Common myeloid progenitor, CD34-positive (primary cell): ENCODE measurements at regions of chr7 and their contacts with region 1.

Region 1: GRCh38 chr7:38107486-38107893 is 70.6 kb upstream of the STARD3NL start:
- DNase-seq: peak; percentile 51 to 71 (median 65)
- H3K4me3 ChIP-seq: no peak overlapping the region
- H3K27ac ChIP-seq: no peak overlapping the region
- H3K4me1 ChIP-seq: peaks cover 0 to 8% (median 7%) of the 10 kb centered on the region in 4 experiments
- H3K27me3 ChIP-seq: no peaks in the 10 kb centered on the region

Region 2: DNA sequence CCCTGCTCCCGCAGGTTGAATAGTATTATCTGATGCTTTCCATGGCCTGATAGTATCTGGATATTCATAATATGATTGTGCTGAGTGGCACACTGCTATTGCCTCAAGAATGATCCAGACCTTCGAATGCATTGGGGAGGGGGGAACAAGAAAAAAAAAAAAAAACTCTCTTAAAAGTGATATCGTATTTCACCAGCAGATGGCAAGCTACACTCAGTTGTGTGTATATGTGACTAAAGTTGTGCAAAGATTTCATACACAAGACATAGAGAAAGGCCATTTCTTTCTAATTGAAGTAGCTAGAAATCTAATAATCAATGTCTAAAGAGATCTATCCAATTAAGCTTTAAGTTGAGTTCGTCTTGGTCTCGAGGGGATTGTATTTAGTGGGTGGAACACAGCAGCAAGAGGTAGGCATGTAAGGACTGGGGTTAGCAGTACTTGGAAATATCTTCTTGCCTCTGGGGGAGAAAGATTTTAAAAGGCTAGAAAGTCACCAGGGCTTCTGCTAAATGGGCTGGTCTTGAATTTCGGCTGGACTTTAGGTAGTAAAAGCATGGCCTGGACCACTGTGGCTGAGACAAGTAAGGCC is 206.2 kb before region 1 on chr7:
- CTCF ChIA-PET with region 1: interaction called, 14 read pairs
- POLR2A ChIA-PET with region 1: no interaction called
- DNase-seq: peak; percentile 61 to 81 (median 75)
- H3K4me3 ChIP-seq: no peak overlapping the region
- H3K27ac ChIP-seq: no peak overlapping the region
- H3K4me1 ChIP-seq: no peaks in the 10 kb centered on the region
- H3K27me3 ChIP-seq: no peaks in the 10 kb centered on the region

Region 3: GRCh38 chr7:38195804-38196595 is 88.5 kb after region 1 on chr7:
- CTCF ChIA-PET with region 1: interaction called, 12 read pairs
- POLR2A ChIA-PET with region 1: no interaction called
- DNase-seq: no peak
- H3K4me3 ChIP-seq: no peak overlapping the region
- H3K27ac ChIP-seq: no peak overlapping the region
- H3K4me1 ChIP-seq: peaks cover 2 to 35% (median 15%) of the 10 kb centered on the region in 4 experiments
- H3K27me3 ChIP-seq: no peaks in the 10 kb centered on the region

Region 4: GRCh38 chr7:38222481-38223096 is 115.1 kb after region 1 on chr7:
- CTCF ChIA-PET with region 1: interaction called, 48 read pairs
- POLR2A ChIA-PET with region 1: interaction called, 3 read pairs
- DNase-seq: peak; percentile 66 to 78 (median 71)
- H3K4me3 ChIP-seq: no peak overlapping the region
- H3K27ac ChIP-seq: peak overlapping the region in 1 of 2 experiments; percentile 52
- H3K4me1 ChIP-seq: peaks cover 0 to 16% (median 6%) of the 10 kb centered on the region in 4 experiments
- H3K27me3 ChIP-seq: no peaks in the 10 kb centered on the region

Region 5: DNA sequence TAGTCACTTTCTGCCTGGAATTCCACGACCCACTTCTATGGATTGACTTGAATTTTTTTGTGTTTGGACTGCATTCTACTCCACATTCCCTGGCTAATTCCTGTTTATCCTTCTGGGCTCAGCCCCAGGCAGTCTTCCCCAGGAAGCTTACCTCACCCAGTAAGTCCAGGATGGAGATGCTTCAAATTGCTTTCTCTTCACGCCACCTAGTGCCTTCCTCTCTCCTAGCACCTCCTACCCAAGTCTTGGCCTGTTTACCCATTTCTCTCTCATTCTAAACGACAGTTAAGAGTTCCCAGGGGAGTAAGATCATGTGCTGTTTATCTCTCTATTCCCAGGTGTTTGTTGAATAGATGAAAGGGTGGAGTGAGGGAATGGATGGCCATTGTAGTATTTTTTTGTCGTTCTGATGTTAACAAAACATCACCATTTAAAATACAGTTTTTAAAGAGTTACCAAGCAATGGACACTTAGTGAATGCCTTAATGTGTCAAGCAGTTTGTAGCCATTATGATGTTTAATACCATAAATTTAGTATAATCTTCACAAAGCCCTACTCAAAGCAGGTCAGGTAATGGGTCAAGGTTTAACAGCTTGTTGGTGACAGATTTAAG is 211.4 kb after region 1 on chr7:
- CTCF ChIA-PET with region 1: interaction called, 14 read pairs
- POLR2A ChIA-PET with region 1: no interaction called
- DNase-seq: peak; percentile 60 to 63 (median 61)
- H3K4me3 ChIP-seq: no peak overlapping the region
- H3K27ac ChIP-seq: no peak overlapping the region
- H3K4me1 ChIP-seq: peaks cover 7 to 45% (median 24%) of the 10 kb centered on the region in 4 experiments
- H3K27me3 ChIP-seq: no peaks in the 10 kb centered on the region